Calu3 (cell line): ENCODE measurements at regions of chr3 and their contacts with region 1.

Region 1: GRCh38 chr3:136955813-136956212 is 2.0 kb upstream of the IL20RB start:
- DNase-seq: peak; percentile 79
- H3K4me3 Mint-ChIP-seq: peak overlapping the region; percentile 47
- H3K27ac Mint-ChIP-seq: peak overlapping the region; percentile 89
- H3K4me1 Mint-ChIP-seq: peaks cover 89% of the 10 kb centered on the region
- H3K27me3 Mint-ChIP-seq: no peaks in the 10 kb centered on the region
- CTCF ChIP-seq: no peak

Region 2: GRCh38 chr3:136994772-136995516 is 39.1 kb after region 1 on chr3:
- CTCF ChIA-PET with region 1: interaction called, 3 read pairs
- intact Hi-C with region 1: loop called (anchors 5 kb)
- DNase-seq: peak; percentile 93
- H3K4me3 Mint-ChIP-seq: no peak overlapping the region
- H3K27ac Mint-ChIP-seq: peak overlapping the region; percentile 63
- H3K4me1 Mint-ChIP-seq: peaks cover 21% of the 10 kb centered on the region
- H3K27me3 Mint-ChIP-seq: no peaks in the 10 kb centered on the region
- CTCF ChIP-seq: no peak

Region 3: GRCh38 chr3:138174421-138175122 is 1218.8 kb after region 1 on chr3 and contains the start of gene DBR1:
- CTCF ChIA-PET with region 1: interaction called, 13 read pairs
- intact Hi-C with region 1: no loop called
- DNase-seq: peak; percentile 91
- H3K4me3 Mint-ChIP-seq: peak within 1 kb of the TSS; percentile 91
- H3K27ac Mint-ChIP-seq: peak within 1 kb of the TSS; percentile 82
- H3K4me1 Mint-ChIP-seq: peaks cover 19% of the 10 kb centered on the region
- H3K27me3 Mint-ChIP-seq: no peaks in the 10 kb centered on the region
- CTCF ChIP-seq: no peak
- total RNA-seq, gene DBR1: 30.8 and 32.8 TPM in 2 replicates